Gastrocnemius medialis (tissue), 4 donors: ENCODE measurements at regions of chr2 and their contacts with region 1.

Region 1: GRCh38 chr2:30527859-30528258 is 80.8 kb downstream of the LCLAT1 start:
- DNase-seq: peak in 1 of 2 donors; percentile 20
- ATAC-seq: peak; percentile 25 to 30
- H3K4me3 ChIP-seq: no peak overlapping the region
- H3K27ac ChIP-seq: peak overlapping the region; percentile 1 to 51 (median 10)
- H3K4me1 ChIP-seq: peaks cover 28 to 35% of the 10 kb centered on the region in 2 donors
- H3K27me3 ChIP-seq: no peaks in the 10 kb centered on the region
- CTCF ChIP-seq: no peak
- POLR2A ChIP-seq: no peak

Region 2: DNA sequence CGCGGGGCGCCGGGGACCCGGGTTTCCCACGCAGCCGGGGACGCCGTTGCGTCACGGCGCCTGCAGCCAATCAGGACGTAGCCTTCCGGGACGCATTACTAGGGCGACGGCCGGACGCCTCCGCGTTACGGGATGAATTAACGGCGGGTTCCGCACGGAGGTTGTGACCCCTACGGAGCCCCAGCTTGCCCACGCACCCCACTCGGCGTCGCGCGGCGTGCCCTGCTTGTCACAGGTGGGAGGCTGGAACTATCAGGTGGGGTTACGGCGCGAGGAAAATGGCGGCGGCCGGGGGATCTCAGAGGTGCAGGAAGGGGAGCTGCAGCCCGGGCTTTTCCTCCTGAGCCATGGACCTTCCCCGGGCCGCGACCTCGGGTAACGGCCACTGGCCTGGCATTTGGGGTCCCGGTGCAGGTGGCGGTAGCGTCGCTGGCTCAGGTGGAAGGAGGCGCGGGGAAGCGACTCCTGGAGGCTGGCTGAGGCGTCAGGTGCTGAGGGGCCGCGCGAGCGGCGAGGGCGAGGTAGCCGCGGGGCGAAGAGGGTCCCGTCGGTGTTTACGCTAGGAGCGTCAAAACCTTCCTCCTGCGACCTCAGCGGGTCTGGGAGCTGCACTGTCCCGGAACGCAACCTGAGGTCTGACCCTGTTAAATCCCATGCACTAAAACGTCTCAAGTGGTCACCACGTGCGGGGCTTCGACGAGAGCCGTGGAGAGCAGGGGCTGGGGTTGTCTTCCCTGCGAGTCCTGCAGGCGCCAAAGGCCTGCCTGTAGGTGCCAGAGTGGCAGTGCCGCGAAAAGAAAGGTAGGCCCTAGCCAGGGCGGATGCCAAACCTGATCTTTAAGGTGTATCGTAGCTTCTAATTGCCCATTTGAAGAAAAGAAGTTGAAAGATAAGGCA is 80.5 kb before region 1 on chr2 and contains the start of gene LCLAT1:
- in situ Hi-C with region 1: no loop called
- intact Hi-C with region 1: no loop called
- DNase-seq: peak; percentile 64 to 71
- ATAC-seq: peak; percentile 90 to 91
- H3K4me3 ChIP-seq: peak within 1 kb of the TSS; percentile 72 to 99 (median 96)
- H3K27ac ChIP-seq: peak within 1 kb of the TSS; percentile 68 to 88 (median 79)
- H3K4me1 ChIP-seq: peaks cover 17 to 18% of the 10 kb centered on the region in 2 donors
- H3K27me3 ChIP-seq: no peaks in the 10 kb centered on the region
- CTCF ChIP-seq: no peak
- POLR2A ChIP-seq: no peak
- total RNA-seq, gene LCLAT1: 4.3 to 14.5 (median 11.3) TPM

Region 3: DNA sequence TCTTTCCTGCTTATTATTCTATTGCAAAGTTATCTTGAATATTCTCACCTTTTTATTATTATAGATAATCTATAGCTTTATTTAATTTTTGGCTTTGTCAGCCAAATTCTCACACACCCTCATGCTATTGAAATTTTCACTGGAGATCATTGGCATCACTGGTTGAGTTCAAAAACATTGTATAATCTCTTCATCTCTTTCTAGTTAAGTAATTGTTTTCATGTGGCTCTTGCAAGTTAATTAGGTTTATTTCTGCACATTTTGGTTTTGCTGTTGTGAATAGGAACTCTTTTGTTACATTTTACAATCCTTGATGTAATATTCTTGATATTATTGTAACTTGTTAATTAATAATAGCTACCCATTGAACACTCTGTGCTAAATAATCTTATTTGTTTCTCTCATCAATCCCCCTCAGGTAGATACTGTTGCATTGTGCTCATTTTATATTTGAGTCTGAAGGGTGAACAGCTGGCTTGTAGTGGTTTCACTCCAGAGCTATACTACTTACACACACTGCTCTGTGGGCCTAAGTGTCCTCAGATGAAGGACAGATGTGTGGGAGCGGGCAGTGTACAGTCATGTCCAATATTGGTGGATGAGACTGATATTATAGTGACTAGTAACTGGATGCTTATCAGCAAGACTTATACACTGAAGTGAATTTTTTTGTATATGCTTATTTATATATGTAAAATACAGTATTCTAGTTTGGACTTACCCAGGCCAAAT is 31.9 kb after region 1 on chr2:
- in situ Hi-C with region 1: no loop called
- intact Hi-C with region 1: loop called (anchors 1 kb)
- DNase-seq: no peak
- ATAC-seq: no peak
- H3K4me3 ChIP-seq: no peak overlapping the region
- H3K27ac ChIP-seq: no peak overlapping the region
- H3K4me1 ChIP-seq: no peaks in the 10 kb centered on the region
- H3K27me3 ChIP-seq: no peaks in the 10 kb centered on the region
- CTCF ChIP-seq: no peak
- POLR2A ChIP-seq: no peak

Region 4: DNA sequence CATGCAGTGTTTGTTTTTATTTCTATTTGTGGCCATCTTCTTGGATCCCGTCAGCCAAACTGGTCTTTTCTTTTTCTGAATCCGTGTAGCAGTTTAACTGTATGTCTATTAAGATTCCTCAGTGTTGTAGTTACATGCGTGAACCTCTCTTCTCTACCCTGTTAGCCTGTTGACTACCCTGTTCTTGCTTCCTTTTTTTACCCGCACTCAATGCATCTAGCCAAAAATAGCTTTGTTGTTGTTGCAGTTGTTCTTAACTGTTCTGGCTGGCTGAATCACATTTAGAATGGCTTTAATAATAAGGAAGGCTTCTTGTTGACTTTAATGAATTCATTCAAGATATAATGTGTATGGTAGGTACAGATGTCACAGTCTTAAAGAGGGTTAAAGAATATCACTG is 56.3 kb after region 1 on chr2:
- in situ Hi-C with region 1: no loop called
- intact Hi-C with region 1: loop called (anchors 10 kb)
- DNase-seq: no peak
- ATAC-seq: peak; percentile 55 to 84
- H3K4me3 ChIP-seq: no peak overlapping the region
- H3K27ac ChIP-seq: peak overlapping the region; percentile 46 to 74 (median 66)
- H3K4me1 ChIP-seq: peaks cover 15 to 38% of the 10 kb centered on the region in 2 donors
- H3K27me3 ChIP-seq: no peaks in the 10 kb centered on the region
- CTCF ChIP-seq: no peak
- POLR2A ChIP-seq: no peak